ENCODE measurements at regions of chr4 and their contacts with region 1.

Region 1: GRCh38 chr4:121823505-121824170 is at the start of gene CCNA2:
- DNase-seq: peak; percentile 97
- H3K4me3 ChIP-seq: peak within 1 kb of the TSS; percentile 96
- H3K27ac ChIP-seq: peak within 1 kb of the TSS; percentile 87
- H3K4me1 ChIP-seq: peaks cover 46% of the 10 kb centered on the region
- CTCF ChIP-seq: no peak
- total RNA-seq, gene CCNA2: 150 and 162 TPM in 2 replicates

Region 2: DNA sequence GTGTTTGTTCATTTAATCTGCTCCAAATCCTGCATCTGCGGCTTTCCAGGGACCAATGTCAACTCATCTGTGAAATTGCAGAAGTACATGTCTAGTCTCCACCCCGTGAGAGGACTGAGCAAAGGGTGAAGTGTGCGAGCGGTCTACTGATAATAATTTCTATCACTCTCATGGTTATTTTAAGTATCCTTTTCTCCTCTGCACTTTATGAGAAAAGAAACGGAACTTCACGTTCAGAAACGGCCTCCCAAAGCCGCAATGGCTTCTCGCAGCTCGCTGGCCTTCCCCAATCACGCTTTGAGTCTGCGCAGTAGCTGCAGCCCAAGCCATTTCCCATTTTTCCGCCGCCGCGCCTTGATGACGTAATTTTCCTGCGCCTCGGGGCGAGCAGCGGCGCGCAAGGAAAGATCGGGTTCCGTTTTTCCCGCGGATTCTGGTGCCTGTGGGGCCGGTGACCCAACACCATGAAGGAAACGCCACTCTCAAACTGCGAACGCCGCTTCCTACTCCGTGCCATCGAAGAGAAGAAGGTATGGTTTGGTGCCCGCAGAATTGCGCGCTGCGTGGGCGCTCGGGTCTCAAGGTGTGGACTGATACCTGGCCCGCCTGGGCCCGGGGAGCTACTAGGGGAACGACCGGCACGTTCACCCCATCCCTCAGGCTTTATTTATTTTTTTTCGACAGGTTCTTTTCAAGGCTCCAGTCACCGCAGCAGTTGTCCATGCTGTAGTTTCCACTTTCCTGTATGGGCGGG is 22.5 kb before region 1 on chr4 and contains the start of gene EXOSC9:
- CTCF ChIA-PET with region 1: no interaction called
- POLR2A ChIA-PET with region 1: interaction called, 22 read pairs
- intact Hi-C with region 1: loop called (anchors 1 kb)
- DNase-seq: peak; percentile 93
- H3K4me3 ChIP-seq: peak within 1 kb of the TSS; percentile 95
- H3K27ac ChIP-seq: peak within 1 kb of the TSS; percentile 87
- H3K4me1 ChIP-seq: peaks cover 37% of the 10 kb centered on the region
- CTCF ChIP-seq: no peak
- total RNA-seq, gene EXOSC9: 58.4 and 69.5 TPM in 2 replicates

Region 3: DNA sequence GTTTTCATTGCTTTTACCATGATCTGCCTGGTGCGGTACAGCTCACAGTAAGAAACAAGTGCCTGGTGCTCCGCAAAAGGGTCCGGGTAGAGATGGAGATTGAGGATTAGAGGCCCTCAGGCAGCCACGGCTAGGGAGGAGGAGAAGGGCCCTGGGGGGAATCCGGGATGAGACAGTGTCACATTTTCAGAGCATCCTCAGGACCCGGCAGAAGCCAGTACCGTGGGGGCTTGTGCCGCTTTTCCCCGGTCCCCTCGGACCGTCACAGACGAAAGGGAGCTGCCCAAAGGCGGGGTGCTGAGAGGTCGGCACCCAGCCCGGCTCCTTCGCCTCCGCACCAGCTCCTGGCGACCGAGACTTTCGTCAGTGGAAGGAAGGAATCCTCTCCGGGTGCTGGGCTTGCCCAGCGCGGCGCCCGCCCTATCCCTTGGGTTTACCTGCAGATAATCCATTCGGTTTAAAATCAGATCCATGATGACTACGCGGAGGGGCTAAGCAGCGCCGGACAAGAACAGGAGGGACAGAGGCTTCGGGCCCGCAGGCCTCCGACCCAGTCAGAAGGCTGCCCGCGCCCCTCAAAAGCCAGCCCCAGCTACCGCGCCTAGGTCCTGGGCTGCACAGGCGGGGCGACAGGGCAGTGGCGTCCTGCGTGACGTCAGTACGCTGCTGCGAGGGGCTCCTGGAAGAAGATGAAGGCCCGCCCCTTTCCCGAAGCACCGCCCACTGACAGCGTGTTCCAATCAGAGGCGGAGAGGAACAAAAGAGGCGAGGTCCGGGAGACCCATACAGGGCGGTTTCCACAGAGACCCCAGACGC is 46.4 kb after region 1 on chr4 and contains the start of gene BBS7:
- CTCF ChIA-PET with region 1: no interaction called
- POLR2A ChIA-PET with region 1: interaction called, 26 read pairs
- intact Hi-C with region 1: loop called (anchors 1 kb)
- DNase-seq: peak; percentile 97
- H3K4me3 ChIP-seq: peak within 1 kb of the TSS; percentile 98
- H3K27ac ChIP-seq: no peak within 1 kb of the TSS
- H3K4me1 ChIP-seq: peaks cover 10% of the 10 kb centered on the region
- CTCF ChIP-seq: no peak
- total RNA-seq, gene BBS7: 10.7 and 13.2 TPM in 2 replicates

Region 4: GRCh38 chr4:122038896-122039295 is 215.3 kb after region 1 on chr4:
- CTCF ChIA-PET with region 1: no interaction called
- POLR2A ChIA-PET with region 1: no interaction called
- intact Hi-C with region 1: no loop called
- DNase-seq: no peak
- H3K4me3 ChIP-seq: no peak overlapping the region
- H3K27ac ChIP-seq: no peak overlapping the region
- H3K4me1 ChIP-seq: no peaks in the 10 kb centered on the region
- CTCF ChIP-seq: no peak

Region 5: DNA sequence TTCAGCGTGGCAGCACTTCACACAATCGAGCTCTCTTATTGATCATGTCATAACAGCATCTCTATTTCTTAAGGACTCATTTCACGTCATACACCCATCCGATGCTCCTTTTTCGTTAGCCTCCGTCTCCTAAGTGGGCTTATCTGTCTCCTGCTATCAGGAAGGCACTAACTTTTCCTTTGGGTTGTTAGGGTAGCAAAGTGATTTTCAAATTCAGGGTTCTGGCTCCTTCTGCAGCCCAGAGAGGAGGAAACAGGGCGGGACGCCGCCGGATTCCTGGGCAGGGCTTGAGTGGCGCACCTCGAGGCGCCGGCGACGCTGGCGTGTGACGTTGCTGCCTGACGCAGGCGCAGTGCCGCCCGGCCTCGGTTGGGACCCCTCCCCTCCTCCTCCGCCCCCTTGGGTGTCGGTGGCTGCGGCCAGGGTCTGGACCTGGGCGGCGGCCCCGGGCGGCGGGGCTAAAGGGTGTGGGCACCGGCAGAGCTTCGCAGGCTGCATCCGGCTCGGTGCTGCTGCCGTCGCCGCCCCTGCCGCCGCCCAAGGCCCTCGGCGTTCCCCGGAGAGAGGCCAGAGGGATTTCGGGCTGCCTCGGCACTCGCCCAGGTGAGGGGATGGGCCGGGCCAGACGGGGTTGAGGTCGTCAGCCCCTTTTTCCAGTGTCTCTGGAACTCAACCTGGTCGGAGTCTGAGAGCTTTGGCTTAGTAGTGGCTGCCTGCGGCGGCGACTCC is 328.5 kb after region 1 on chr4 and contains the start of gene BLTP1:
- CTCF ChIA-PET with region 1: no interaction called
- POLR2A ChIA-PET with region 1: interaction called, 3 read pairs
- intact Hi-C with region 1: loop called (anchors 5 kb)
- DNase-seq: peak; percentile 88
- H3K4me3 ChIP-seq: peak within 1 kb of the TSS; percentile 95
- H3K27ac ChIP-seq: peak within 1 kb of the TSS; percentile 49
- H3K4me1 ChIP-seq: peaks cover 21% of the 10 kb centered on the region
- CTCF ChIP-seq: no peak
- total RNA-seq, gene BLTP1: 40.3 and 41.6 TPM in 2 replicates

Region 6: DNA sequence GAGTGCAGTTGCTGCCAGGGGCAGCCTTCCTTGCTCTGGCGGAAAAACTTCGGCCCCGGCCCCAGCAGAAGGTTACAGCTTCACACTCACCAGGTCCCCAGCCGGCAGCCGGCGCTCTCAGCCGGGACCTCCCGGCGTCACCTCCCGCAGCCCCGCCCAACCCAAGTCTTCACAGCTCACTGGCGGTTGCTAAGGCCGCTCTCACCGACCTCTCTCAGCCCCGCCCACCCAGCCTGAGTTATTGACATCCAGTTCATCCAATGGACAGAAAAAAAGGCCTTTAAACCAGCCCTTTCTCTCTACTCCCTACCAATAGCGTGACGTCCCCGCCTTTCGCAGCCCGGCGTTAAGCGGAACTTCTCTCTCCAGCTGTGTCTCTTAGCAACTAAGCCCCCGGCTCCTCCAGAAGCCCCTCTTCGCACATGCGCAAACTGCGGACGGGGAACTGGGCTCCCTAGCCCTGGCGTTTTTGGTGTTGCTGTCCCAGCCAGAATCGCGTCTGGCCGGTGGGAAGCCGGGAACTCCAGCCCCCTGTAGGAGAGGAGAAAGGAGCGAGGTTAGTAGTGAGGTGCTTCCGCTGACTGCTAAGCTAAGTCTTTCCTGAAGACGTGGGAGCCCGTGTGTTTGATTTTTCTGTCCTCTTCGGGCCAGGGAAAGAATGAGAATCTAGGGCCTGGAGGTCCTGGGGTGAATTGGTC is 908.8 kb after region 1 on chr4 and contains the start of gene BBS12:
- CTCF ChIA-PET with region 1: no interaction called
- POLR2A ChIA-PET with region 1: no interaction called
- intact Hi-C with region 1: loop called (anchors 10 kb)
- DNase-seq: peak; percentile 99
- H3K4me3 ChIP-seq: peak within 1 kb of the TSS; percentile 79
- H3K27ac ChIP-seq: no peak within 1 kb of the TSS
- H3K4me1 ChIP-seq: peaks cover 7% of the 10 kb centered on the region
- CTCF ChIP-seq: peak; percentile 66
- total RNA-seq, gene BBS12: 1.7 and 1.8 TPM in 2 replicates

Region 7: DNA sequence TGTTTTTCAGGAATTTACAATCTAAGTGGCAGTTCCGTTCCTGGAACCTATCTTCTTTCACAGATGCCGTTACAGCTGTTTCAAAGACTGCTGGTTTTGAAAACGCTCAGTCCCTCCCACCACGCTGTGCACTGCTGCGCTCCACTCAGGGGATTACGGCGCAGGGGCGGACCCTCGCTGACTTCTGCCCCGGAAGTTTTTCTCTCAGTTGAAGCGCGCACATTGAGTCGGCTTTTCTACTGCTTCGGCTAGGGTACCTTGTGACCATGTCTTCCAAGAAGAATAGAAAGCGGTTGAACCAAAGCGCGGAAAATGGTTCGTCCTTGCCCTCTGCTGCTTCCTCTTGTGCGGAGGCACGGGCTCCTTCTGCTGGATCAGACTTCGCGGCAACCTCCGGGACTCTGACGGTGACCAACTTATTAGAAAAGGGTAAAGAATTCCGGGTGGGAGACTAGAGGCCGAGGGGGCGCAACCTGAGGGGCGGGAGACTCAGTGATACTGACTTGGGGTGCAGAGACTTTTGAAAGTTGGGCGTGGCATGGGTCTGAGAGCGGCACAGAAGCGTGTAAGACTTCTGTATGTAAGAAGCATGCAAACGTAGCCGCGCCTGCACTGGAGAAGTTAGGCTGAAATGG is 1099.4 kb after region 1 on chr4:
- CTCF ChIA-PET with region 1: no interaction called
- POLR2A ChIA-PET with region 1: interaction called, 3 read pairs
- intact Hi-C with region 1: loop called (anchors 5 kb)
- DNase-seq: peak; percentile 93
- H3K4me3 ChIP-seq: peak overlapping the region; percentile 93
- H3K27ac ChIP-seq: peak overlapping the region; percentile 91
- H3K4me1 ChIP-seq: peaks cover 10% of the 10 kb centered on the region
- CTCF ChIP-seq: 0 out of 2 replicates have a peak, but pooled peaks have one; percentile 9

Measured in OCI-LY7 (cell line).